Right cardiac atrium (tissue), 5 donors: ENCODE measurements at regions of chr14 and their contacts with region 1.

Region 1: GRCh38 chr14:26394150-26394810 is 203.6 kb downstream of the NOVA1 start:
- DNase-seq: no peak
- ATAC-seq: peak in 1 of 2 donors; percentile 76
- H3K4me3 ChIP-seq: no peak overlapping the region
- H3K27ac ChIP-seq: no peak overlapping the region
- H3K4me1 ChIP-seq: no peaks in the 10 kb centered on the region
- H3K27me3 ChIP-seq: no peaks in the 10 kb centered on the region

Region 2: DNA sequence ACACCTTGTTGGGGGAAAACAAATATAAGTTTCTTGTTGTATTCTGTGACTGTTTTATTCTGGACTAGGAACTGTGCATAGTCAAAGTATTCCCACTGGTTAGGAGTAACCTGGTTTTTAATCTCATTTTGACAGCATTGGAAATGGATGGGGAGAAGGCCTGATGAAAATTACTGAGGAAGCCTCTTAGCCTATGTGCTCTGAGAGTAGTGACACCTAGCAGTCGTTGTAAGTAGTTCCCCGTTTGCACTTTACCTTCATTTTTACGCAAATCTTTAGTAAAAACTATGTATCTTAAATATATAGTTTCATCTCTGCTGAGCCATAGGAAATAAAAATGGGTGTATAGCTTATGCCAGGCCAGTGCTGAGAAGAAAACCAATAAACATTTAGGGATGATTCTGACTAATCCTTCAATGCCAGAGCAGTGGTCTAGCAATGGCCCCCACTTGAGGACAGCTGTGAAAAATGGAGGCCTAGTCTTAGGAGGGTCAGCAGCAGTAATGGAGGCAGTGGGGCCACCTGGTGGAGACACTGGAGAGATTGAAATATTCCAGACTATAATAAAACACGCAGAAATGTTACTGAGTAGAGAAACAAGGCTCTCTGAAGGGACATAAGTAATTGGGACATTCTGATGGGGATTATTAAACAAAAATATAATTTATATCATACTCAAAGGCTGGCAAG is 336.8 kb after region 1 on chr14:
- intact Hi-C with region 1: loop called in 1 of 4 experiments (anchors 5 kb)
- DNase-seq: peak in 2 of 3 donors; percentile 8 to 47
- ATAC-seq: no peak
- H3K4me3 ChIP-seq: no peak overlapping the region
- H3K27ac ChIP-seq: no peak overlapping the region
- H3K4me1 ChIP-seq: no peaks in the 10 kb centered on the region
- H3K27me3 ChIP-seq: no peaks in the 10 kb centered on the region

Region 3: DNA sequence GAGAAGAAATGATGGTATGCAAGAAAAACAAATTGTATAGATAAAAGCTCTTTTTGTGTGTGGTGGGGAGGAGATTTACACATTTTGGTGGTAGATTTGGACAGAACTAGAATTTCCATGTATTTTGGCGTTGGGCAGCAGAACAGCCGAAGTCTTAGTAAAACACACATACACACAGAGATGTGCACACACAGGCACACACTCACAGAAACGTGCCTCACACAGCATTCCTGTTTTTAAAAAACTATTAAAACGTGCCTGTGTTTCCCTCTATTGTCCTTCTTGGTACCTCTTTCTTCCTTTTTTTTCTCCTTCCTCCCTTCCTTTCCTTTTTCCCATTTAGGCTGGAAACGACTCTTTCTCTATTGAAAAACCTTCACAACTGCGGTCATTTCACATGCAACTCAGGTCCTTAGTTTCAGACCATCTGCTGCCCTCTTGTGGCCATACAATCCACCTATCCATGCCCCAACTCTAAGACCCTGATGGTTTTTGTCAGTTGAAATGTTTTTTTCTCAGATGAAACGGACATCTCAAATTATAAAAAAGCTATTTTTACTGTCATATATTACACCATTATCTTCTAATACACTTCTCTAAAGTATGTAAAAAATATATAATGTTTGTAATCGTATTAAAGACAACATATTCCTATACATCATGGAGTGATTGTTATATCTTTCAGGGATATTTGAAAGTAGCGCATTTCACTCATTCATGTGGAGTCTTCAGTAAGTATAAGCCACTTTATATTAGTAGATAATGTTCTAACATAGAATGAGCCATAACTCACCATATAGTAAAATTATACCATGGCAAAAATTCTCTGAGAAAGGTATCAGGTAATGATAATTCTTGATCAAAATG is 590.3 kb after region 1 on chr14:
- intact Hi-C with region 1: loop called in 3 of 4 experiments (anchors 10 kb)
- DNase-seq: peak in 2 of 3 donors; percentile 60 to 66
- ATAC-seq: peak in 1 of 2 donors; percentile 69
- H3K4me3 ChIP-seq: no peak overlapping the region
- H3K27ac ChIP-seq: no peak overlapping the region
- H3K4me1 ChIP-seq: no peaks in the 10 kb centered on the region
- H3K27me3 ChIP-seq: no peaks in the 10 kb centered on the region